Tibial artery (tissue), 4 donors: ENCODE measurements at regions of chr19 and their contacts with region 1.

Region 1: GRCh38 chr19:46186101-46187100 is 38.4 kb downstream of the IGFL2 start:
- DNase-seq: no peak
- H3K4me3 ChIP-seq: no peak overlapping the region
- H3K27ac ChIP-seq: no peak overlapping the region
- H3K4me1 ChIP-seq: peaks cover 0 to 4% (median 0%) of the 10 kb centered on the region in 4 donors
- H3K27me3 ChIP-seq: peaks cover 0 to 40% of the 10 kb centered on the region in 2 donors
- CTCF ChIP-seq: no peak

Region 2: DNA sequence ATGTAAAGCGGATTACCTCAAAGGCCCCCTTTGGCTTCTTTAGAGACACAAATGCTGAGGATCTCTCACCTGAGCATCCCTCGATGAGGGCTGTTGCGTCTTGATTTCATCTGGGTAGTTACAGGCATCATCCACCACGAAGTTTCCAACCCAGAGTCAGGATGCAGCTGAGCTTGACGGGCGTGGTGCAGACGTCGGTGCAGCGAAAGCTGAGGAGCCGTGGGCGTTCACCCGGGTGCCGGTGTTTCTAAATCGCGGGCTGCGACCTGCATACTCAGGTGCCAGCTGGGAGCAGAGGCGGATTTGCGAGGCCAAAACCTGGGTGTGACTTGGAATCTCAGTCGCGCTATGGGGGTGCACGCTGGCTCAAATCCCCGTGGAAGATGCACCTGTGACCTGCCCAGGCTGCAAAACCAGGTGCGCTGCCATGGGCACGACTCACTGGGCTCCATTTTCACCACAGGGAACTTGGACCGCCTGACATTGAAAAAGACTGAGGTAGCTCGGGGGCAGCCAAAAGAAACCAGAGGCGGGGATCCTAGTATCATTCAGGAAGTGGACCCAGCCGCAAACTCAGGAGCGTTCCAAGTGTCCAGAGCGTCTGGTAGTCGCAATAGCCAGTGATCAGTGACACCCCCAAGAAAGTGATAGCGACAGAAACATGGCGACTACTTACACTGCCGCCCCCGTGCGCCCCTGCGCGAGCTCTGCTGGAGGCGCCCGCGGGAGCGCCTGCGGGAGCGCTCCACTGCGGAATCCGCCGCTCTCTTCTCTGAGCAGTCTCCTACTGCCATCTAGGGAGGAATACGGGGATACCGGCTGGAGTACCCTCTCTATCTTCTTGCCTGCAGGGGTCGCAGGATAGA is 109.2 kb before region 1 on chr19:
- intact Hi-C with region 1: loop called (anchors 5 kb)
- DNase-seq: peak in 1 of 2 donors; percentile 21
- H3K4me3 ChIP-seq: peak overlapping the region in 1 of 2 donors; percentile 19
- H3K27ac ChIP-seq: no peak overlapping the region
- H3K4me1 ChIP-seq: peaks cover 0 to 10% (median 4%) of the 10 kb centered on the region in 4 donors
- H3K27me3 ChIP-seq: peaks cover 0 to 60% of the 10 kb centered on the region in 2 donors
- CTCF ChIP-seq: peak; percentile 38 to 41